Naive thymus-derived CD4-positive, alpha-beta T cell (primary cell): ENCODE measurements at regions of chr11 and their contacts with region 1.

Region 1: GRCh38 chr11:10122326-10123197 is 171.5 kb downstream of the SBF2 start:
- DNase-seq: no peak
- ATAC-seq: no peak
- H3K4me3 ChIP-seq: no peak overlapping the region
- H3K4me3 Mint-ChIP-seq: no peak overlapping the region
- H3K27ac ChIP-seq: no peak overlapping the region
- H3K27ac Mint-ChIP-seq: no peak overlapping the region
- H3K4me1 ChIP-seq: no peaks in the 10 kb centered on the region
- H3K4me1 Mint-ChIP-seq: peaks cover 0 to 7% (median 0%) of the 10 kb centered on the region in 7 donors
- H3K27me3 ChIP-seq: no peaks in the 10 kb centered on the region
- H3K27me3 Mint-ChIP-seq: peaks cover 0 to 3% (median 0%) of the 10 kb centered on the region in 5 donors

Region 2: DNA sequence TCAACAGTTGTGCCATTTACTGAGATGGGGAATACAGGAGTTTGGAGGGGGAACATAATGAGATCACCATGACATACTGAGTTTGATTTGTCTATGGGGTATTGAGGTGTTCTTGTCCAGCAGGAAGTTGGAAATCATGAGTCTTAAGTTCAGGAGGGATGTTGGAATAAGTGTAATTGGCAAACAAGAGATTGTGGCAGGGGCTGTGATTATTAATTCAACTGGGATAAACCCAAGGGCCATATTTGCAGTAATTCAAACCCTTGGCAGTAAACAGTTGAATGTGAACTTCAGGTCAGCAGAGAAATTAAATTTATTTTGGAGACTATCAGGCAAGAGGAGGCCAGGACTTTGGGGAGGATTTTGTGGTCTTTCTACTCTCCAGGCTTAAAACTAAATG is 215.7 kb after region 1 on chr11:
- CTCF ChIA-PET with region 1: no interaction called
- POLR2A ChIA-PET with region 1: no interaction called
- intact Hi-C with region 1: loop called in 1 of 2 experiments (anchors 5 kb)
- DNase-seq: no peak
- ATAC-seq: no peak
- H3K4me3 ChIP-seq: no peak overlapping the region
- H3K4me3 Mint-ChIP-seq: no peak overlapping the region
- H3K27ac ChIP-seq: no peak overlapping the region
- H3K27ac Mint-ChIP-seq: no peak overlapping the region
- H3K4me1 ChIP-seq: no peaks in the 10 kb centered on the region
- H3K4me1 Mint-ChIP-seq: no peaks in the 10 kb centered on the region
- H3K27me3 ChIP-seq: no peaks in the 10 kb centered on the region
- H3K27me3 Mint-ChIP-seq: peaks cover 10 to 27% (median 23%) of the 10 kb centered on the region in 5 donors